ENCODE measurements at regions of chr14 and their contacts with region 1.

Region 1: DNA sequence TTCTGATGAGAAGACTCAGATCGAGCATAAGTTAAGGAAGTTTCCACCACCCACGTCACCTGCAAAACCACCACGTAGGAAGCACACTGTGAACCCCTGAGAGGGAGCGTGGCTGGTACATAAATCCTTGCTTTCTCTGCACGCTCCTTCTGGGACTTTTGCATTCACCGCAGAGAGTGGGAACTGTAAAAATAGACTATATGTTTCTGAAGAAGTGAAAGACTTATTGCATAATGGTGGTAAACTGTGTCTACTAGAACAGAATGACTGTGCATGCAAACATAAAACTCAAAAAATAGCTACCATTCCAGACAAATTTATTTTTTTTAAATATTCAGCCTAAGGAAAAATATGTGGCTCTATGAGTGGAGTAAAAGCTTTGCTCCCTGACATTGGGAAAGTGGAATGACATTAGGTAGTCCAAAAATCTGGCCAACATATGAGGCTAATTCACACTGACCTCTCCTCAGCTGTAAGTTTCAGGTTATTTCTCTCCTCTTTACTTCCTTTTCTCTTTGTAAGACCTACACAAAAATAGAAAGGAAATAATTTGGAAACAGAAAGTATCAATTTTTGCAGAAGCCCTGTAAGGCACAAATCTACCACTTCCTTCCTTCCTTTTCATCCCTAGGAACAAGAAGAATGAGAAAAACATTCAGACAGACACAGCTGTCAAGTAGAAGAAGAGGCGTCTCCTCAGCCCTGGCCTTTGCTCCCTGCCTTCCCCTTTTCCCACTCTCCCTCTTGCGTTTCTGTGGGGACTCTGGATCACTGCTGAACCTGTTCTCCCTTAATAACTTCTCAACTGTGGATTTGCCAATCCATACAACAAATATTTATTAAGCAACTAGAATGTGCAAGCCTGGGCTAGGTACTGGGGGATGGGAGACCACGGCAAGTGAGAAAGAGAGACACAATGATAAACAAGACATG is 264.3 kb upstream of the FOXN3 start:
- DNase-seq: peak in 18 of 42 donors; percentile 8 to 55 (median 36)

Region 2: GRCh38 chr14:89578156-89578555 is 103.2 kb before region 1 on chr14:
- intact Hi-C with region 1: no loop called
- DNase-seq: peak in 4 of 42 donors; percentile 15 to 43 (median 20)

Region 3: GRCh38 chr14:89730687-89731086 is 49.3 kb after region 1 on chr14:
- intact Hi-C with region 1: loop called (anchors 10 kb)
- DNase-seq: peak in 4 of 42 donors; percentile 12 to 39 (median 22)

Measured in head of caudate nucleus (tissue), 42 donors.